ENCODE measurements at regions of chr1 and their contacts with region 1.

Region 1: DNA sequence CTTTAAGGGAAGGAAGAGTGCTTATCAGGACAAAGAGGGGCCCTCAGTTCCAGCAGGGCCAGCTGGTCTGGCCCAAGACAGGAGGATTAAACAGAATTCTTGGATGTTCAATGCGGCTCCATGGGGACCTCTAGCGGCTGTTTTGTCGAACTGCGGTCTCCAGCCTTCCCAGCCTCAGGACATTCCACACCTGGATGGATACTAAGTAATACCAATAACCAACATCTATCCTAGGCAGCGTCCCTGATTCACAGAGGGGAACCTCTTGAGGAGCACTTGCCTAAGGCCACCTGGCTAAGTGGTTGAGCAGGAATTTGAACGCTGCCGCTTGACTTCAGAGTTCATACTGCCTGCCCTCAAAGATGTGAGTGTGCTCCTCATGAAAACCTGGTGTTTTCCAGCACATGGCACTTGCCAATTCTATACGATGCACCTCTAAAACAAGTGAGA is 15.5 kb upstream of the CD247 start:
- DNase-seq: peak; percentile 55 to 65 (median 60)
- H3K4me3 ChIP-seq: no peak overlapping the region
- H3K4me3 Mint-ChIP-seq: no peak overlapping the region
- H3K27ac ChIP-seq: no peak overlapping the region
- H3K27ac Mint-ChIP-seq: no peak overlapping the region
- H3K4me1 ChIP-seq: no peaks in the 10 kb centered on the region
- H3K4me1 Mint-ChIP-seq: peaks cover 3 to 4% (median 3%) of the 10 kb centered on the region in 4 donors
- H3K27me3 ChIP-seq: no peaks in the 10 kb centered on the region
- H3K27me3 Mint-ChIP-seq: no peaks in the 10 kb centered on the region

Region 2: GRCh38 chr1:166910396-166910994 is 623.4 kb before region 1 on chr1:
- CTCF ChIA-PET with region 1: interaction called, 10 read pairs
- POLR2A ChIA-PET with region 1: interaction called, 3 read pairs
- intact Hi-C with region 1: no loop called
- DNase-seq: peak; percentile 73 to 86 (median 80)
- H3K4me3 ChIP-seq: no peak overlapping the region
- H3K4me3 Mint-ChIP-seq: no peak overlapping the region
- H3K27ac ChIP-seq: no peak overlapping the region
- H3K27ac Mint-ChIP-seq: no peak overlapping the region
- H3K4me1 ChIP-seq: peaks cover 3% of the 10 kb centered on the region
- H3K4me1 Mint-ChIP-seq: peaks cover 0 to 7% (median 4%) of the 10 kb centered on the region in 4 donors
- H3K27me3 ChIP-seq: no peaks in the 10 kb centered on the region
- H3K27me3 Mint-ChIP-seq: peaks cover 0 to 5% of the 10 kb centered on the region in 2 donors

Region 3: DNA sequence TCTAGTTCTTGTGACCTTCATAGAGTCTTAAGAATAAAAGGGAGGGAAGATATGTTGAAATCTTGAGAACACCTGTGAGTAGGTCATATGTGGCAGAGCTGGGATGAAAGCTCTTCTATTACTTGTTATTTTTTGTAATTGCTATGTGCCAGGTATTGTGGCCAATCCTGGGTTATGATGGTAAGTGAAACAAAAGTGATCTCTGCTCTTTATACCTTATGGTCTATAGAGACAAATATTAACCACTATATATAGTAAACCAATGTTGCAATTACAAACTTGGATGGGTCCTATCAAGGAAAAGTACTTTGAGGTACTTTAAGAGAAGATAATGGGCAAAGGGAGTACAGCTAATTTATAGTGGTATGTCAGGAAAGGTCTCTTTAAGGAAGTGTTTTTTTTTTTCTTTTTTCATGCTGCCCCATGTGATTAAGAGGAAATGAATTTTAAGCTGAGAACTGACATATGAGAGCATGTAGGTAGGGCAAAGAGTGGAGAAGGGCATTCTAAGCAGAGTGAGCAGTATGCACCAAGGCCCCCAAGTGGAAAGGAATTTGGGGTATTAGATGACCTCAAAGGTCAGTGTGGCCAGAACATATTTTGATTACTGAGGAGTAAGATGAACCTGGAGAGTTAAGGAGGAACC is 269.9 kb before region 1 on chr1:
- CTCF ChIA-PET with region 1: interaction called, 134 read pairs
- POLR2A ChIA-PET with region 1: no interaction called
- intact Hi-C with region 1: loop called (anchors 1 kb)
- DNase-seq: peak in 2 of 5 donors; percentile 4 to 8
- H3K4me3 ChIP-seq: no peak overlapping the region
- H3K4me3 Mint-ChIP-seq: no peak overlapping the region
- H3K27ac ChIP-seq: no peak overlapping the region
- H3K27ac Mint-ChIP-seq: no peak overlapping the region
- H3K4me1 ChIP-seq: peaks cover 45% of the 10 kb centered on the region
- H3K4me1 Mint-ChIP-seq: peaks cover 17 to 27% (median 19%) of the 10 kb centered on the region in 4 donors
- H3K27me3 ChIP-seq: no peaks in the 10 kb centered on the region
- H3K27me3 Mint-ChIP-seq: no peaks in the 10 kb centered on the region

Region 4: GRCh38 chr1:167401260-167401873 is 132.5 kb before region 1 on chr1:
- CTCF ChIA-PET with region 1: interaction called, 86 read pairs
- POLR2A ChIA-PET with region 1: interaction called, 3 read pairs
- intact Hi-C with region 1: loop called (anchors 1 kb)
- DNase-seq: peak in 4 of 5 donors; percentile 37 to 47 (median 41)
- H3K4me3 ChIP-seq: no peak overlapping the region
- H3K4me3 Mint-ChIP-seq: no peak overlapping the region
- H3K27ac ChIP-seq: no peak overlapping the region
- H3K27ac Mint-ChIP-seq: no peak overlapping the region
- H3K4me1 ChIP-seq: no peaks in the 10 kb centered on the region
- H3K4me1 Mint-ChIP-seq: peaks cover 0 to 3% (median under 1%) of the 10 kb centered on the region in 4 donors
- H3K27me3 ChIP-seq: no peaks in the 10 kb centered on the region
- H3K27me3 Mint-ChIP-seq: no peaks in the 10 kb centered on the region

Region 5: GRCh38 chr1:167430134-167430856 is 103.6 kb before region 1 on chr1:
- CTCF ChIA-PET with region 1: interaction called, 13 read pairs
- POLR2A ChIA-PET with region 1: no interaction called
- intact Hi-C with region 1: no loop called
- DNase-seq: no peak
- H3K4me3 ChIP-seq: no peak overlapping the region
- H3K4me3 Mint-ChIP-seq: peak overlapping the region in 1 of 8 donors; percentile 47
- H3K27ac ChIP-seq: no peak overlapping the region
- H3K27ac Mint-ChIP-seq: peak overlapping the region; percentile 10 to 89 (median 70)
- H3K4me1 ChIP-seq: peaks cover 53% of the 10 kb centered on the region
- H3K4me1 Mint-ChIP-seq: peaks cover 27 to 48% (median 35%) of the 10 kb centered on the region in 4 donors
- H3K27me3 ChIP-seq: no peaks in the 10 kb centered on the region
- H3K27me3 Mint-ChIP-seq: no peaks in the 10 kb centered on the region

Region 6: GRCh38 chr1:167447521-167448136 is 86.2 kb before region 1 on chr1:
- CTCF ChIA-PET with region 1: interaction called, 64 read pairs
- POLR2A ChIA-PET with region 1: interaction called, 5 read pairs
- intact Hi-C with region 1: loop called (anchors 1 kb)
- DNase-seq: peak; percentile 73 to 93 (median 76)
- H3K4me3 ChIP-seq: peak overlapping the region; percentile 7 to 34
- H3K4me3 Mint-ChIP-seq: peak overlapping the region; percentile 66 to 92 (median 82)
- H3K27ac ChIP-seq: peak overlapping the region; percentile 63
- H3K27ac Mint-ChIP-seq: peak overlapping the region; percentile 91 to 99 (median 96)
- H3K4me1 ChIP-seq: peaks cover 83% of the 10 kb centered on the region
- H3K4me1 Mint-ChIP-seq: peaks cover 59 to 93% (median 74%) of the 10 kb centered on the region in 4 donors
- H3K27me3 ChIP-seq: no peaks in the 10 kb centered on the region
- H3K27me3 Mint-ChIP-seq: no peaks in the 10 kb centered on the region

Region 7: DNA sequence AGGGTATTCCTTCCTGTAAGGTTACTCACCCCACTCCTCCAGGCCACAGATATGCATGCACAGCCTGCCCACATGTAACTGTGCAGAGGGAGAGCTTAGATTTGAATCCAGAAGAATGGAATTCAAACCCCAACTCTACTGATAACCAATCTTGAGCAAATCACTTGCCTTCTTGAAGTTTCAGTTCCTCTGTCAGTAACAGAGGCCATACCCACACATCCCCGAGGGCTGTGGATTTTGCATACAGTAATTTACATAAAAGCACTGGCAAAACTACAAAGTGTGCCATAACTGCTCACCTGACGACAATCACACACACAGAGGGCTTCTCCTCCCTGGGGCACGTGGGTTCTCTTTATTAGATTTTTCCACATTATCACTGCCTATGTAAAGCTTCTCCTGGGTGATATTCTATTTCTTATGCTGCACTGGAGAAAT is 34.2 kb before region 1 on chr1:
- CTCF ChIA-PET with region 1: interaction called, 24 read pairs
- POLR2A ChIA-PET with region 1: no interaction called
- intact Hi-C with region 1: no loop called
- DNase-seq: peak in 1 of 5 donors; percentile 62
- H3K4me3 ChIP-seq: no peak overlapping the region
- H3K4me3 Mint-ChIP-seq: peak overlapping the region in 7 of 8 donors; percentile 26 to 88 (median 73)
- H3K27ac ChIP-seq: peak overlapping the region; percentile 32
- H3K27ac Mint-ChIP-seq: peak overlapping the region; percentile 75 to 100 (median 88)
- H3K4me1 ChIP-seq: peaks cover 100% of the 10 kb centered on the region
- H3K4me1 Mint-ChIP-seq: peaks cover 83 to 100% (median 95%) of the 10 kb centered on the region in 4 donors
- H3K27me3 ChIP-seq: no peaks in the 10 kb centered on the region
- H3K27me3 Mint-ChIP-seq: no peaks in the 10 kb centered on the region